MCF 10A (cell line): ENCODE measurements at regions of chr19 and their contacts with region 1.

Region 1: GRCh38 chr19:7970716-7971448 is 27.4 kb upstream of the TIMM44 start:
- DNase-seq: peak; percentile 72
- H3K4me3 Mint-ChIP-seq: no peak overlapping the region
- H3K27ac Mint-ChIP-seq: no peak overlapping the region
- H3K4me1 Mint-ChIP-seq: no peaks in the 10 kb centered on the region
- H3K27me3 Mint-ChIP-seq: no peaks in the 10 kb centered on the region
- CTCF ChIP-seq: peak; percentile 81

Region 2: DNA sequence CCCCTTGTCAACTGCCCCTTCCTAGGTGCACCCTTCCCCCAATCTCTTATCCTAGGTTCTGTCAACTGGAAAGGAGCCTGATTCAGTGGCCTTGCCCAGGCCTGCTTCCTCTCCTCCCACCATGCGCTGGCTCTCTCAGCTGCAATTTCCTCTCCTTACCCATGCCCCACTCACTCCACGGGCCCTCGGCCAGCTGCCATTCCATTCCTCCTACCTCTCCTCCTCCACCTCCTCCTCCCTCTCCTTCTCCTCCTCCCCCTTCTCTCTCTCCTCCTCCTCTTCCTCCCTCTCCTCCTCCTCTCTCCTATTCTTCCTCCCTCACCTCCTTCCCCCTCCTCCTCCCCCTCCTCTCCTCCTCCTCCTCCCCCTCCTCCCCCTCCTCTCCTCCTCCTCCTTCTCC is 17.8 kb before region 1 on chr19:
- CTCF ChIA-PET with region 1: interaction called, 11 read pairs
- POLR2A ChIA-PET with region 1: no interaction called
- intact Hi-C with region 1: no loop called
- DNase-seq: peak; percentile 53
- H3K4me3 Mint-ChIP-seq: no peak overlapping the region
- H3K27ac Mint-ChIP-seq: no peak overlapping the region
- H3K4me1 Mint-ChIP-seq: peaks cover 5% of the 10 kb centered on the region
- H3K27me3 Mint-ChIP-seq: no peaks in the 10 kb centered on the region
- CTCF ChIP-seq: no peak

Region 3: DNA sequence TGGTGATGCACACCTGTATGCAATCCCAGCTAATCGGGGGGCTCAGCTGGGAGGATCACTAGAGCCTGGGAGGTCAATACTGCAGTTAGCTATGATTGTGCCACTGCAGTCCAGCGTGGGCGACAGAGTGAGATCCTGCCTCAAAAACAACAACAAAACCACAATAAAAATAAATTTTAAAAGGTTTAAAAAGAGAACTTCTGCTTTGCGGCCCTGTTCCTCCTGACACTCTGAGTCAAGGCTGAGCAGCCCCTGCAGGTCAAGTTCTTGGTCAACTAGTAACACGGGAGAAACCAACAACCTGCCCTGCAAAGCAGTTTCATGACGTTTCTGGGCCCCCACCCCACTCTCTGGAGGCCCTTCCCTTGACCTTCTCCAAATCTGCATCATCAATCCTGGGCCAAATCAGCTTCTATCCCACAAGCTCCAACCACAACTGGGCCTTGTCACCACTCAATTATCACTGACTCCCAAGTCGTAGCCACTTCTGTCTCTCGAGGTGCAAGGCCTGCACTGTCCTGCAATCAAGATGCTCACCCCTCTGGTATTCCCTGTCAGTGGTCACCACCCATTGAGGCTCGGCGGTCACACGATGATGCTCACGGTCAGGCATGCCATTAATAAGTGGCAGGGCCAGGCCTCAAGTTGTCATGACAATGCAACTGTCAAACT is 27.1 kb after region 1 on chr19:
- CTCF ChIA-PET with region 1: interaction called, 57 read pairs
- POLR2A ChIA-PET with region 1: interaction called, 9 read pairs
- intact Hi-C with region 1: loop called (anchors 1 kb)
- DNase-seq: no peak
- H3K4me3 Mint-ChIP-seq: no peak overlapping the region
- H3K27ac Mint-ChIP-seq: no peak overlapping the region
- H3K4me1 Mint-ChIP-seq: peaks cover 44% of the 10 kb centered on the region
- H3K27me3 Mint-ChIP-seq: no peaks in the 10 kb centered on the region
- CTCF ChIP-seq: no peak

Region 4: DNA sequence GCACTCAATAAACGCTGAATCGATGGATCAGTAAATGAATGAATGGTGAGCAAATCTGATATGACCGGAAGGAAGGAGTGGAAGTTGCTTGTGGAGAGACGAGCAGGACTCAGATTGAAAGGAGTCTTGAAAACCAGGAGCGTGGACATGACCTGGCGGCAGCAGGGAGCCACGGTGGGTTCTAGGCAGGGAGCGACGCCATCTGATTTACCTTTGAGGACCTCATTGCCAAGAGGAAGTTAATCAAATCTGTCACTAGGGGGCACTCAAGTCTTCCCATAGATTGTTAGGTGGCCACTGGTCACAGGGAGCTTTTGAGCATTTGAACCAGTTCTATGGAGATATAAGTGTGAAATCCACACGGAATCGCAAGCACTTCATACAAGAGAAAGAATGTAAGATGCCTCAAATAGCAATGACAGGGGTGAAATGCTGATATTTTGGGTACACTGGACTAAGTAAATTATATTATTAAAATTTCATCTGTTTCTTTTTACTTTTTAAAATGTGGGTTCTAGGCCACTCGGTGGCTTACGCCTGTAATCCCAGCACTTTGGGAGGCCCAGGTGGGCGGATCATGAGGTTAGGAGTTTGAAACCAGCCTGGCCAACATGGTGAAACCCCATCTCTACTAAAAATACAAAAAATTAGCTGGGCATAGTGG is 187.7 kb after region 1 on chr19:
- CTCF ChIA-PET with region 1: interaction called, 4 read pairs
- POLR2A ChIA-PET with region 1: no interaction called
- intact Hi-C with region 1: loop called (anchors 10 kb)
- DNase-seq: peak; percentile 88
- H3K4me3 Mint-ChIP-seq: no peak overlapping the region
- H3K27ac Mint-ChIP-seq: no peak overlapping the region
- H3K4me1 Mint-ChIP-seq: peaks cover 13% of the 10 kb centered on the region
- H3K27me3 Mint-ChIP-seq: peaks cover 18% of the 10 kb centered on the region
- CTCF ChIP-seq: peak; percentile 55